Pancreas (tissue), 10 donors: ENCODE measurements at regions of chrX and their contacts with region 1.

Region 1: GRCh38 chrX:43559644-43560043 is 96.5 kb upstream of the MAOA start:
- DNase-seq: peak in 3 of 6 donors; percentile 15 to 53 (median 16)
- ATAC-seq: peak; percentile 51 to 84 (median 82)
- H3K4me3 ChIP-seq: no peak overlapping the region
- H3K27ac ChIP-seq: no peak overlapping the region
- H3K4me1 ChIP-seq: no peaks in the 10 kb centered on the region
- H3K27me3 ChIP-seq: no peaks in the 10 kb centered on the region
- CTCF ChIP-seq: peak in 2 of 4 donors; percentile 21 to 38

Region 2: DNA sequence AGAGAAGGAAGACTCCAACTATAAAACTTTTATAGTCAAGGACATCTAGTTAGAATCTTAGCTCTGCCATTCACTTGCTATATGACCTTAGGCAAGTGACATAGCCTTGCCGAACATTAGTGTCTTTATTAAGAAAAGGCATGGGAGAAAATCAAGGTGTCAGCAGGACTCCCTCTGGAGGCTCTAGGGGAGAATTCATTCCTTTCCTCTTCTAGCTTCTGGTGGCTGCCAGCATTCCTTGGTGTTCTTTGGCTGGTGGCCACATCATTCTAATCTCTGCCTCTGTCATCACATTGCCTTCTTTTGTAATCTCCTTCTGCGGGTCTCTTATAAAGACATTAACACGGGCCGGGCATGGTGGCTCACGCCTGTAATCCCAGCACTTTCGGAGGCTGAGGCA is 881.5 kb before region 1 on chrX:
- intact Hi-C with region 1: no loop called
- DNase-seq: peak in 4 of 6 donors; percentile 12 to 23 (median 18)
- ATAC-seq: peak; percentile 49 to 79 (median 56)
- H3K4me3 ChIP-seq: no peak overlapping the region
- H3K27ac ChIP-seq: no peak overlapping the region
- H3K4me1 ChIP-seq: peaks cover 0 to 7% (median 0%) of the 10 kb centered on the region in 3 donors
- H3K27me3 ChIP-seq: no peaks in the 10 kb centered on the region
- CTCF ChIP-seq: peak in 1 of 4 donors; percentile 11

Region 3: DNA sequence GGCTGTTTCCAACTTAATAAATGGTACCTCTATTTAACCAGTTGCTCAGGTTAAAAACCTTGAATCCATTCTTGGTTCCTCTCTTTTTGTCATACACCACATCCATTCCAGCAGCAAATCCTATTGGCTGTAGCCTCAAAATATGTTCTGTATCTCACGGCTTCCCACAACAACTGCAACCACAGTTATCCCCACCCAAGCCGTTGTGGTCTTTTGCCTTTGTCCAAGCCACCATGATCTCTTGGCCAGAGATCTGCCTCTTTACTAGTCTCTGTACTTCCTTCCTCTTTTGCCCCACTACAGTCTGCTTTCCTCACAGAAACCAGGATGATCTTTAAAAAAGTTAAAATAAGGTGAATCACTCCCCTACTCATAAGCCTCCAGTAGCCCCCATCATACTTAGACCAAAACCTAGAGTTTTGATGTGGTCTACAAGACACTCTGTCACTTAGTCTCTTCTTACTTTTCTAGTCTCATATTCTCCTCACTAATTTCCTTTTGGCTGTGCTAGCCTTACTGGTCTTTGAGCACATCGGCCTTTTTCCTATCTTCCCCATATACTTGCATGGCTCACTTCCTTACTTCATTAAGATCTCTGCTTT is 106.8 kb after region 1 on chrX:
- intact Hi-C with region 1: no loop called
- DNase-seq: no peak
- ATAC-seq: no peak
- H3K4me3 ChIP-seq: no peak overlapping the region
- H3K27ac ChIP-seq: no peak overlapping the region
- H3K4me1 ChIP-seq: peaks cover 0 to 16% (median 6%) of the 10 kb centered on the region in 3 donors
- H3K27me3 ChIP-seq: peaks cover 0 to 8% (median 2%) of the 10 kb centered on the region in 4 donors
- CTCF ChIP-seq: no peak

Region 4: DNA sequence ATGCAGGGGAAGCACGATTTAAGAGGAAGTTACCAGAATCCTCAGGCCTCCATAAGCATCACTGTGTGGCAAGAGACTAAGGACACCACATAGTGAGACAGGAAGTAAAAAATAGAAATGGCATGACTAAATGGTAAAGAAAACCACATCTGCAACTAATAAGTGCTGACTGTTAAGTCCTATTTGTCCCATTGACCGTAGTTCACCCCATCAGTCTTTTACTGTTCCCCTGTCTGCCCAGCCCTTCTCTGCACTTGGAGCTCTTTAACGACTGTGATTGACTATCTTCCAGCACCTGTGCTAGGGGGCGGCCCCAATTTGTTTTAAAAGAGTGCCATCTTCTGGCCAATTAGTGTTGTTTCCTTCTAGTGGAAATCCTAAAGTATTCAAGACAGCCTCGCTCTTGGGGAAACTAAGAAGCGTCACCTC is 190.6 kb after region 1 on chrX:
- intact Hi-C with region 1: loop called (anchors 5 to 10 kb)
- DNase-seq: peak in 4 of 6 donors; percentile 16 to 54 (median 34)
- ATAC-seq: peak; percentile 85 to 92 (median 91)
- H3K4me3 ChIP-seq: no peak overlapping the region
- H3K27ac ChIP-seq: no peak overlapping the region
- H3K4me1 ChIP-seq: peaks cover 0 to 17% (median 3%) of the 10 kb centered on the region in 3 donors
- H3K27me3 ChIP-seq: no peaks in the 10 kb centered on the region
- CTCF ChIP-seq: peak; percentile 18 to 41 (median 34)

Region 5: DNA sequence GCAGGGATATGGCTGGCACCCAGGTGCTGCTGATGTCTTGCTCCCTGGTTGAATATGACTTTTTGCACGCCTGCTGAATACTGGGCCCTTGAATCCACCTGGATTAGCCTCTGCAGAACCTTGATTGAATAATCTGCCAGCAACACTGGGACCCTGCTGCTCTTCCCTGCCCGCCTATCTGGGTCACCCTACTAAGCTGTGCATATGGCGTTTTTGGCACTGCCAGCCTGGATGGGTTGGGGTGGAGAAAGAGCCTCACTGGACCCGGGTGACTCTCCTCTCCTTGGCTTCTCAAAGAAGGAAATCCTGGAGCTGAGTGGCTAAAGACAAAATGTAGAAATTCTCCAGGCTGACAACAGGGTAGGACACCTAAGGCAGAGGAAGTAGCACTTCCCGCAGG is 196.4 kb after region 1 on chrX:
- intact Hi-C with region 1: loop called (anchors 5 to 10 kb)
- DNase-seq: no peak
- ATAC-seq: no peak
- H3K4me3 ChIP-seq: no peak overlapping the region
- H3K27ac ChIP-seq: no peak overlapping the region
- H3K4me1 ChIP-seq: no peaks in the 10 kb centered on the region
- H3K27me3 ChIP-seq: peaks cover 0 to under 1% (median 0%) of the 10 kb centered on the region in 4 donors
- CTCF ChIP-seq: no peak